Colonic mucosa (tissue), 4 donors: ENCODE measurements at regions of chr21 and their contacts with region 1.

Region 1: GRCh38 chr21:22791986-22792560 is 1793.9 kb downstream of the NCAM2 start:
- DNase-seq: peak; percentile 18
- H3K4me3 ChIP-seq: no peak overlapping the region
- H3K27ac ChIP-seq: no peak overlapping the region
- H3K4me1 ChIP-seq: no peaks in the 10 kb centered on the region
- H3K27me3 ChIP-seq: no peaks in the 10 kb centered on the region
- CTCF ChIP-seq: peak; percentile 84

Region 2: GRCh38 chr21:20999659-21000058 is 1792.4 kb before region 1 on chr21:
- intact Hi-C with region 1: loop called (anchors 5 kb)
- DNase-seq: peak; percentile 44
- H3K4me3 ChIP-seq: no peak overlapping the region
- H3K27ac ChIP-seq: no peak overlapping the region
- H3K4me1 ChIP-seq: no peaks in the 10 kb centered on the region
- H3K27me3 ChIP-seq: peaks cover 8% of the 10 kb centered on the region
- CTCF ChIP-seq: peak; percentile 44

Region 3: GRCh38 chr21:21163904-21164303 is 1628.2 kb before region 1 on chr21:
- intact Hi-C with region 1: loop called (anchors 5 kb)
- DNase-seq: peak; percentile 24
- H3K4me3 ChIP-seq: no peak overlapping the region
- H3K27ac ChIP-seq: no peak overlapping the region
- H3K4me1 ChIP-seq: no peaks in the 10 kb centered on the region
- H3K27me3 ChIP-seq: no peaks in the 10 kb centered on the region
- CTCF ChIP-seq: peak; percentile 58

Region 4: DNA sequence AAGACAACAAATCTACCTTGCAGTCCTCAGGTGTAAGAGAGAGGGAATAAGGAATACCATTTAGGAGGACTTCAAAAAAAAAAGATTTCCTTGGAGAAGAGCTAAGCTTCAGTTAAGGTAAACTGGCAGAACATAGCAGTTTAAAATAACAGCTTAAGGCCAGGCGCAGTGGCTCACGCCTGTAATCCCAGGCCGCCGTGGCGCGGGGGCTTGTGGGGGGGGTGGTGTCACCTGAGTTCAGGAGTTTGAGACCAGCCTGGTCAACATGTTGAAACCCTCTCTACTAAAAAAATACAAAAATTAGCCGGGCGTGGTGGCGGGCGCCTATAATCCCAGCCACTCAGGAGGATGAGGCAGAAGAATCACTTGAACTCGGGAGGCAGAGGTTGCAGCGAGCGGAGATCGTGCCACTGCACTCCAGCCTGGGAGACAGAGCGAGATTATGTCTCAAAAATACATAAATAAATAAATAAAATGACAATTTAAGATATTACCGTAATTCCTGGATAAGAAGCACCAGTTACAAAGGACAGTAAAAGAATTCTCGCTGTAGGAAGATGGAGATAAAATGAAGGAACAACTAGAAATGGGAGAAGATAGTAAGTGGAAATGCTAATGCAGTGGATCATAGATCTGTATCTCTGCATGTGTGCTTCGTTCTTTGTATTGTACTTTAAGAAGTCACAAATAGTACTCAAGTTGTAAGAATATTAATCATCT is 653.6 kb before region 1 on chr21:
- intact Hi-C with region 1: no loop called
- DNase-seq: no peak
- H3K4me3 ChIP-seq: no peak overlapping the region
- H3K27ac ChIP-seq: no peak overlapping the region
- H3K4me1 ChIP-seq: no peaks in the 10 kb centered on the region
- H3K27me3 ChIP-seq: no peaks in the 10 kb centered on the region
- CTCF ChIP-seq: no peak